Posterior vena cava (tissue), 2 donors: ENCODE measurements at regions of chr2 and their contacts with region 1.

Region 1: DNA sequence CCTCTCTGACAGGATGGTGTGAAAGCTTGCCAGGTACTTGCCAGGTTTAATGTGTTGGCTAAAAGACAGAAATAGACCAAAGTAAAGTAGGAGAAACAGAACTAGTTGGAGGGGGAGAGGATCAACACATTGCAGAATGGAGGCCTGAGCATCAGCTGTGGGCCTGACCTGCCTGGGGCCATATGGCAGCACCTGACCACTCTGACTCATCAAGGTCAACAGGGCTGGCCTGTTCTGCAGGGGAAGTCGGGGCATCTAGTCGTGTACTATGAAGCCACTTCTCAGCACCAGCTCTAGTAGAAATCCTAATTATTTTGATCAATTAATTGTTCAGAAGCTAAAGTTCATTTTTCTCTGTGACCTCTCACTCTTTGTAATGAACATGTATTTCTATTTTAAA is 35.8 kb upstream of the NOSTRIN start:
- DNase-seq: no peak

Region 2: GRCh38 chr2:168744844-168745243 is 21.8 kb before region 1 on chr2:
- intact Hi-C with region 1: loop called in 1 of 2 experiments (anchors 1 kb)
- DNase-seq: no peak